Colonic mucosa (tissue), 4 donors: ENCODE measurements at regions of chr10 and their contacts with region 1.

Region 1: DNA sequence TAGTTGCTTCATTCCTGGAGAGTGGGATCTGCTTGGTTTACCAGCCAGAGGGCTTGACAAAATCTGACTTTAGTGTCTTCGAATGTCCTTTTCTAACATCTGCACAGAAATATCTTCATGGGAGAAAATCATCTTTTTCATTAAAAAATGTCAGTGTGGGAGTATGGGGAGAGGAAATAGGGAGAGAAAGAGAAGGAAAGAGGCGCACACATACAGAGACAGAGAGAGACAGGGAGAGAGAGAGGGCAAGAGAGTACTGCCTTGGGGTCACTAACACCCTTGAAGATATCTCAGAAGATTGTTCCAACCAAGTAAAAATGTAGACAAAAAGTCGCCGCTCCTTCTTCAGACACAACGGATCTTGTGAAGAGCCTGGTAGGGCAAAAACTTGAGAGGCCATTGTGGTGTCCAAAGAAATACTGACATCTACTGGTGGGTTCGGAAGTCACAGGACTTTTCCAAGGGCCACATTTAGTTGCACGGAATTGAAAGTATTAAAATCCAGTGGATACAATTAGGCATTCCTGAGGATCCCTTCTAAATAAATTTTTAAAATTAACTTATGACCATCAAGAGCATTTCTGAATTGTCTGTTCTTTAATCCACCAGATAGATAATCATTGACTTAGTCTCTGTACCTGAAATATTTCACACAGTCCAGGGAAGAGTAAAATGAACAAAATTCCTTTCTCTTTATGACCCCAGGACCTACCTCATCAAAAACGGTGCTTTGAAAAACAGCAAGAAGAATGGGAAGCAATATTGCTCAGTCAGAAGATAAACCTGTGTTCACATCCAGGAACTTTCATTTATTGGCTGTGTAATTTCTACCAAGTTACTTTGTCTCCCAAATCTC is 29.7 kb downstream of the VIM start:
- DNase-seq: peak; percentile 74
- H3K4me3 ChIP-seq: no peak overlapping the region
- H3K27ac ChIP-seq: no peak overlapping the region
- H3K4me1 ChIP-seq: no peaks in the 10 kb centered on the region
- H3K27me3 ChIP-seq: no peaks in the 10 kb centered on the region
- CTCF ChIP-seq: peak; percentile 73

Region 2: DNA sequence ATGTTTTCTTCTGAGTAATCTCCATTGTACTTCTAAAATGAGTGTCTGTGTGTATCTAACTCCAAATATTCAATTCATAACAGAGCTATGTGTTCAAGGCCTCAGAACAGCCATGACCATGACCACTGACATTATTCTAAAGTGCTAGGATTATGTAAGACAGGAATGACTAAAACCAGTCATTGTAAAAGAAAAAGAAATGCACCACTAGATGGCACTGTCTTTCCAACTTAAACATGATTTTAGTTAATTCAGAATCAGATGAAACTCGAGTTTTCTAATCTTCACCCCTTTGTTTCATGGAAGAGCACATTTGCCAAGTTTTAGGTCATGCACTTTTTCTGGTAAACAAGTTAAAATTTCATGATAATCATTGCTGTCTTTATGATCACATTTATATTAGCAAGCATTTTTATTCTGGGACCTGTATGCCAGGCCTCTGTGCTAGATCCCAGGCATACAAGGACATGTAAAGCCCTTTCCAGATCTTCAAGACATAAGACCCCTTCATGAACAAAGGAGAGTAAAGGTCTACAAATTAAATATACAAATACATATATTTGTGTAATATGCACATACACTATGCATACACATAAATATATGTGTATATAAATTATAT is 414.3 kb before region 1 on chr10:
- intact Hi-C with region 1: loop called (anchors 2 kb)
- DNase-seq: no peak
- H3K4me3 ChIP-seq: no peak overlapping the region
- H3K27ac ChIP-seq: no peak overlapping the region
- H3K4me1 ChIP-seq: no peaks in the 10 kb centered on the region
- H3K27me3 ChIP-seq: no peaks in the 10 kb centered on the region
- CTCF ChIP-seq: peak; percentile 55

Region 3: GRCh38 chr10:17316488-17317170 is 58.9 kb after region 1 on chr10:
- intact Hi-C with region 1: no loop called
- DNase-seq: no peak
- H3K4me3 ChIP-seq: no peak overlapping the region
- H3K27ac ChIP-seq: no peak overlapping the region
- H3K4me1 ChIP-seq: no peaks in the 10 kb centered on the region
- H3K27me3 ChIP-seq: no peaks in the 10 kb centered on the region
- CTCF ChIP-seq: no peak